Spleen (tissue), 13 donors: ENCODE measurements at regions of chr7 and their contacts with region 1.

Region 1: DNA sequence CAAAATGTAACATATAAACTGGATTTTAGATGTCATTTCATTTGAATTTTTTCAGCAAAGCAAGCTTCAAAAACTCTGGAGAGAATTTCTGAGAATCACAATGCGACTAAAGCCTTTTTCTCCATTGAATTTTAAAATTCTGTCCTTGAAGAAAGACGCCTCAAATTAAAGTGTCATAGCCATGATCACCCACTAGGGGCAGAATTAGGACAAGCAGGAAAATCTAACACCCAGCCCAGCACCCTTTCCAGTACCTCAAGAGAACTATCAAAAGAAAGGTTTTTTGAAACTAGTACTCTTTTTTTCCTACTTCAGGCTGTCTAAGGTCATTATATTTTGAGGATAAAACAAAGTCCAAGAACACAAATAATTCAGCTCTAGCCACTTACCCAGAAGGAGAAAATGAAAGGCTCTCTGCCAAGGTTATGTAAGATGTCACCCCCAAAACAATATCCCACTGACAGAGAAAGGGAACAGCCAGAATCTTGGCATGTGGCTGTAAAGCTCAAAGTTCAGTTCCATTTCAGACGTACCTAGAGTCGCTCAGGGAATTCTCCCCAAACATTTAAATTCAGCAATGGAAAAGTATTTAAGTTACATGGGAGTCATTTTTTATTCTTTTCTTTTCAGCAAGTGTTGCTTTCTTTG is 299.4 kb downstream of the SNX13 start:
- DNase-seq: no peak
- H3K4me3 ChIP-seq: no peak overlapping the region
- H3K27ac ChIP-seq: no peak overlapping the region
- H3K4me1 ChIP-seq: no peaks in the 10 kb centered on the region
- H3K27me3 ChIP-seq: no peaks in the 10 kb centered on the region
- CTCF ChIP-seq: peak in 10 of 11 experiments; percentile 22 to 71 (median 54)
- POLR2A ChIP-seq: no peak

Region 2: GRCh38 chr7:16982640-16983350 is 658.1 kb before region 1 on chr7:
- intact Hi-C with region 1: loop called (anchors 10 kb)
- DNase-seq: no peak
- H3K4me3 ChIP-seq: no peak overlapping the region
- H3K27ac ChIP-seq: no peak overlapping the region
- H3K4me1 ChIP-seq: peaks cover 0 to 14% (median 5%) of the 10 kb centered on the region in 6 donors
- H3K27me3 ChIP-seq: peaks cover 0 to 5% (median 0%) of the 10 kb centered on the region in 7 donors
- CTCF ChIP-seq: peak; percentile 72 to 90 (median 80)
- POLR2A ChIP-seq: no peak

Region 3: GRCh38 chr7:17713584-17713983 is 72.7 kb after region 1 on chr7:
- intact Hi-C with region 1: no loop called
- DNase-seq: no peak
- H3K4me3 ChIP-seq: no peak overlapping the region
- H3K27ac ChIP-seq: no peak overlapping the region
- H3K4me1 ChIP-seq: no peaks in the 10 kb centered on the region
- H3K27me3 ChIP-seq: no peaks in the 10 kb centered on the region
- CTCF ChIP-seq: no peak
- POLR2A ChIP-seq: no peak

Region 4: DNA sequence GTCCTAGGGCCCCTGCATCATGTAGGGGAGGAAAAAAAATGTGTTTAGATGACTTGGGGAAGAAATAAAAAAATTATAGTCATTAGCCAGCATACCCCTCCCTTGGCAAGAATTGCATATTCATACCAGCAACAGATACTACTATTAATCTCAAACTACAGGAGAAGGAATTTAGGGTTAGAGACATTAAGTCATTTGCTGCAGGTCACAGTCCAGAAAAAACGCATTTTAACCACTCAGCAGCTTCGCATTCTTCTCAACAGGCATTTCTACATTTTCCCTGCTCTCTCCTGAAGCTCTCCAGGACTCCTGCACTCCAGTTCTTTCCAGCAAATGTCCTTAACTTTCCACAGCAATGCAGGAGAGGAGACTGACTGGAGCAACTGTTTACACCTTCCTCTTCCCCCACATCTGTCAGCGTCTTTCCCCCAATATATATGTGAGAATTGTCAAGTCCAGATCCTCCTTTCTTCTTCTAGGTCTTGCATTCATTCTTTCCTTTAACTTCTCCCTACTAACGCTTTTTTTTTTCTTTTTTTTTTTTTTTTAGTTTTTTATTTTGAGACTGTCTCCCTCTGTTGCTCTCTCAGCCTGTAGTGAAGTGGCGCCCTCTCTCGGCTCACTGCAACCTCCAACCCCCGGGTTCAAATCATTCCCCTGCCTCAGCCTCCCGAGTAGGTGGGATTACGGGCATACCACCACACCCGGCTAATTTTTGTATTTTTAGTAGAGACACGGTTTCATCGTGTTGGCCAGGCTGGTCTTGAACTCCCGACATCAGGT is 351.2 kb after region 1 on chr7:
- intact Hi-C with region 1: no loop called
- DNase-seq: no peak
- H3K4me3 ChIP-seq: no peak overlapping the region
- H3K27ac ChIP-seq: no peak overlapping the region
- H3K4me1 ChIP-seq: no peaks in the 10 kb centered on the region
- H3K27me3 ChIP-seq: no peaks in the 10 kb centered on the region
- CTCF ChIP-seq: peak in 2 of 11 experiments; percentile 11 to 13
- POLR2A ChIP-seq: no peak